ENCODE measurements at regions of chr20 and their contacts with region 1.

Region 1: GRCh38 chr20:31851240-31851955 is 6.0 kb upstream of the FOXS1 start:
- DNase-seq: peak in 1 of 3 donors; percentile 16
- ATAC-seq: no peak
- H3K4me3 ChIP-seq: no peak overlapping the region
- H3K27ac ChIP-seq: no peak overlapping the region
- H3K4me1 ChIP-seq: no peaks in the 10 kb centered on the region
- H3K27me3 ChIP-seq: no peaks in the 10 kb centered on the region

Region 2: DNA sequence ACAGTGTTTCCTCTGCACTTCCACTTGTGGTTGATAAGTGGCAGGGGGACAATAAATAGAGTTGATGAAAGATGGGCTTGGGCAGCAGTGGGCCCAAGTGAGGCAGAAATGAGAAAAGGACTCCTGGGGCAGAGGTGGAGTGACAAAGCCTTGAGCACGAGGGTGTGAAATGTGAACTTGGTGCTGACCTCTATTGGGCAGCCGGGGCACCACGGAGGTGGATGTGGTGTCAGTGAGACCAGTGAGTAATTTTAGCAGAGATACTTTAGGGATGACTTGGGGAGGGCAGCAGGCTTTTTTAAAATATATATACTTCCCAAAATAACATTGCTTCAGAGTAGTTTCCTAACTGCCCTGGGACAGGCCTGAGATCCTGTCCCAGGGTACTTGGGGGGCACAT is 62.8 kb before region 1 on chr20:
- intact Hi-C with region 1: no loop called
- DNase-seq: no peak
- ATAC-seq: peak in 1 of 2 donors; percentile 21
- H3K4me3 ChIP-seq: no peak overlapping the region
- H3K27ac ChIP-seq: no peak overlapping the region
- H3K4me1 ChIP-seq: no peaks in the 10 kb centered on the region
- H3K27me3 ChIP-seq: no peaks in the 10 kb centered on the region

Region 3: GRCh38 chr20:31951530-31952453 is 100.4 kb after region 1 on chr20 and contains the start of gene PDRG1:
- intact Hi-C with region 1: loop called (anchors 2 to 10 kb)
- DNase-seq: peak; percentile 96 to 99 (median 99)
- ATAC-seq: peak; percentile 97
- H3K4me3 ChIP-seq: peak within 1 kb of the TSS; percentile 85
- H3K27ac ChIP-seq: peak within 1 kb of the TSS; percentile 55
- H3K4me1 ChIP-seq: peaks cover 6% of the 10 kb centered on the region
- H3K27me3 ChIP-seq: no peaks in the 10 kb centered on the region
- total RNA-seq, gene PDRG1: 7.4 to 8.8 (median 8.6) TPM

Measured in right cardiac atrium (tissue), 5 donors.